Activated B cell treated with CpG ODN at 0.5 μM for 24 hours (primary cell): ENCODE measurements at regions of chr6 and their contacts with region 1.

Region 1: DNA sequence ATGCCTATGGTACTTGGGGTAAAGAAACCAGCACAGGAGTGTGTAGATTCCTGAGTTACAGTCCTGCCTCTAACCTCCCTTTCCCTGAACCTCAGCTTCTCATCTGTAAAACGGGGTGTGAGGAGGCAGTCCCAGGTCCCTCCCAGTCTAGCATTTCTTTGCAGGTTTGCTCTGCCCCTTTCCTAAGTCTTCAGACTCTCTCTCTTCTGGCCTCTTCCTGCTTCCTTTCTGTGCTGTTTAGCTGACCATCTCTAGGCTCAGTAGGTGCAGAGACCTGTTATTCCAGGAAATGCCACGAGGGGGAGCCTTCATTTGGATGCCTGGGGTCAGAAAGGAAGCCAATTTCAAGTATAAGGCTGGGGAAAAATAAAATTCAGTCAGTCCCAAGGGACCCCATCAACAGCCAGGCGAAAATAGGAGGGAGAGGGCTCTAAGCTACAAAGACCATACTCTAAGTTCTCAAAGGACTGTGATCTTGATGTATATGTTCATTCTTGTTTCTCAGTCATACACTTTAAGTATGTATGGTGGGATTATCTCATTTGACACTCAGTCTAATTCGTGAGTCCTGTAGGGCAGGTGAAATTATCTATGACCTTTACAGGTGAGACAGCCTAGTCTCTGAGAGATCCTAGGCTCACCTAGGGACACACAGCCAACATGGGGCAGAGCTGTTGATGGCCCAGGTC is 89.1 kb downstream of the NCR2 start:
- DNase-seq: peak; percentile 62
- ATAC-seq: peak; percentile 45
- H3K4me3 Mint-ChIP-seq: no peak overlapping the region
- H3K27ac Mint-ChIP-seq: no peak overlapping the region
- H3K4me1 Mint-ChIP-seq: peaks cover 10% of the 10 kb centered on the region
- H3K27me3 Mint-ChIP-seq: peaks cover 11% of the 10 kb centered on the region
- CTCF ChIP-seq: peak; percentile 60

Region 2: GRCh38 chr6:41442800-41443501 is 18.4 kb after region 1 on chr6:
- CTCF ChIA-PET with region 1: interaction called, 6 read pairs
- POLR2A ChIA-PET with region 1: interaction called, 8 read pairs
- intact Hi-C with region 1: loop called (anchors 1 kb)
- DNase-seq: peak; percentile 22
- ATAC-seq: no peak
- H3K4me3 Mint-ChIP-seq: no peak overlapping the region
- H3K27ac Mint-ChIP-seq: no peak overlapping the region
- H3K4me1 Mint-ChIP-seq: peaks cover 42% of the 10 kb centered on the region
- H3K27me3 Mint-ChIP-seq: peaks cover 10% of the 10 kb centered on the region
- CTCF ChIP-seq: peak; percentile 13

Region 3: GRCh38 chr6:41455818-41456217 is 31.3 kb after region 1 on chr6:
- CTCF ChIA-PET with region 1: interaction called, 17 read pairs
- POLR2A ChIA-PET with region 1: no interaction called
- intact Hi-C with region 1: loop called (anchors 1 kb)
- DNase-seq: no peak
- ATAC-seq: no peak
- H3K4me3 Mint-ChIP-seq: no peak overlapping the region
- H3K27ac Mint-ChIP-seq: no peak overlapping the region
- H3K4me1 Mint-ChIP-seq: no peaks in the 10 kb centered on the region
- H3K27me3 Mint-ChIP-seq: no peaks in the 10 kb centered on the region
- CTCF ChIP-seq: no peak

Region 4: GRCh38 chr6:41531591-41532582 is 107.4 kb after region 1 on chr6:
- CTCF ChIA-PET with region 1: no interaction called
- POLR2A ChIA-PET with region 1: interaction called, 7 read pairs
- intact Hi-C with region 1: loop called (anchors 5 kb)
- DNase-seq: peak; percentile 64
- ATAC-seq: peak; percentile 81
- H3K4me3 Mint-ChIP-seq: peak overlapping the region; percentile 83
- H3K27ac Mint-ChIP-seq: peak overlapping the region; percentile 95
- H3K4me1 Mint-ChIP-seq: peaks cover 73% of the 10 kb centered on the region
- H3K27me3 Mint-ChIP-seq: no peaks in the 10 kb centered on the region
- CTCF ChIP-seq: no peak